ENCODE measurements at regions of chr15 and their contacts with region 1.

Region 1: DNA sequence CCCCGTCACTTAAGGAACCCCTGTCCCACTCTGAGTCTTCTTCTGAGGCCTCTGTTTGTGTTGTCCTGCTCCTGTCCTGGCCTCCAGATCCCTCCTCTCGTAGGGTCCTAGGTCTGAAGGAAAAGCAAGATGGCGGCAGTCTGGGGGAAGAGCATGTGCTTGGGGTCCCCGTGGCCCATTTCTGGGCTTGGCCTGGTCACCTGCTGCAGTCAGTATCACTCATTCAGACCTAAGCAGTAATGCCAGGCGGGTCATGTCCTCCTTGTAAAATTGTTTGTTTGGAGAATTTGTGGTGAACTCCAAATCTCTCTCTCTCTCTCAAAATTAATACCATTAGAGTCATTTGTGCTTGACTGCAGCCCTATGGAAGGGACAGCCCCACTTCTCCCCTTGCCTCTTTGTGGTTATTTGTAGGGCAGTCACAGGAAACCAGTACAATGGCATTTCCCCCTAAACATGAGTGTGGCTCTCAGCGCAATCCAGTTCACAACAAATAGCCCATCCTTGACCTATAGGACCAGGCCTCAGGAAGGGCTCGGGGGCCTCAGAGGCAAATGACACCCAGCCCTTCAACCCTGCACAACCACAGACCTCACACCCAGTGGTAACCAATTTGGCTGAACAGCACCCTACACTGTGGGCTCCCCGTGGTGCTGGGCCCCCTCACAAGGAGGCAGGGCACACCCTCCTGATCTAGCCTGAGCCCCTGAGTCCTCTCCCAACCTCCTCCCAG is 173.5 kb downstream of the OR4M2 start:
- DNase-seq: peak; percentile 42
- H3K4me3 Mint-ChIP-seq: no peak overlapping the region
- H3K27ac Mint-ChIP-seq: no peak overlapping the region
- H3K4me1 Mint-ChIP-seq: peaks cover 15% of the 10 kb centered on the region
- H3K27me3 Mint-ChIP-seq: no peaks in the 10 kb centered on the region

Region 2: GRCh38 chr15:22265056-22265945 is 11.5 kb after region 1 on chr15:
- CTCF ChIA-PET with region 1: no interaction called
- POLR2A ChIA-PET with region 1: no interaction called
- intact Hi-C with region 1: loop called (anchors 1 kb)
- DNase-seq: peak; percentile 50
- H3K4me3 Mint-ChIP-seq: no peak overlapping the region
- H3K27ac Mint-ChIP-seq: no peak overlapping the region
- H3K4me1 Mint-ChIP-seq: peaks cover 11% of the 10 kb centered on the region
- H3K27me3 Mint-ChIP-seq: no peaks in the 10 kb centered on the region